ENCODE measurements at regions of chr15 and their contacts with region 1.

Region 1: DNA sequence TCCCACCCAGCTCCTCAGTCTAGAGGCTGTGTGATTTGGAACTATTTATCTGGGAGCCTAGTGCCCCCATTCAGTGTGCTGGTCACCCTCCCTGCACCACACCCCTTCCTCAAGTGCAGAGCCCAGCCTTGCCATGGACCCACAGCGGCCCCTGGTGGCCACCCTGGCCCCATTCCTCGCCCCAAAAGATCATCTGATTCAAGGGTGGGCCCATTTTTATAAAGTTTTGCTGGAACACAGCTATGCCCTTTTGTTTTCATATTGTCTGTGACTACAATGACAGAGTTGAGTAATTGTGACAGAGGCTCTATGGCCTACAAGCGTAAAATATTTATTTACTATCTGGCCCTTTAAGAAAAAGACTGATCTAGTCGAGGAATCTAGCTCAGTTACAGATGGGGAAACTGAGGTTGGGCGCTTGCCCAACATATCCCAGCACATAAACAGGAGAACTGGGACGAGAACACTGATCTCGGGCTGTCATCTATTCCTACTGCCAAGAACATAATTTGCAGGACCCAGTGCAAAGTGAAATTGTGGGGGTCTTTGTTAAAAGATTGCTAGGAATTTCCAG is 1.8 kb downstream of the FES start:
- DNase-seq: peak; percentile 80 to 85
- ATAC-seq: peak; percentile 65 to 76 (median 65)
- H3K4me3 ChIP-seq: peak overlapping the region; percentile 52
- H3K4me3 Mint-ChIP-seq: peak overlapping the region; percentile 90
- H3K27ac ChIP-seq: peak overlapping the region; percentile 61
- H3K27ac Mint-ChIP-seq: peak overlapping the region; percentile 85 to 86
- H3K4me1 ChIP-seq: peaks cover 63% of the 10 kb centered on the region
- H3K4me1 Mint-ChIP-seq: peaks cover 17 to 40% of the 10 kb centered on the region in 2 donors
- H3K27me3 ChIP-seq: no peaks in the 10 kb centered on the region
- H3K27me3 Mint-ChIP-seq: no peaks in the 10 kb centered on the region
- CTCF ChIP-seq: peak; percentile 99

Region 2: DNA sequence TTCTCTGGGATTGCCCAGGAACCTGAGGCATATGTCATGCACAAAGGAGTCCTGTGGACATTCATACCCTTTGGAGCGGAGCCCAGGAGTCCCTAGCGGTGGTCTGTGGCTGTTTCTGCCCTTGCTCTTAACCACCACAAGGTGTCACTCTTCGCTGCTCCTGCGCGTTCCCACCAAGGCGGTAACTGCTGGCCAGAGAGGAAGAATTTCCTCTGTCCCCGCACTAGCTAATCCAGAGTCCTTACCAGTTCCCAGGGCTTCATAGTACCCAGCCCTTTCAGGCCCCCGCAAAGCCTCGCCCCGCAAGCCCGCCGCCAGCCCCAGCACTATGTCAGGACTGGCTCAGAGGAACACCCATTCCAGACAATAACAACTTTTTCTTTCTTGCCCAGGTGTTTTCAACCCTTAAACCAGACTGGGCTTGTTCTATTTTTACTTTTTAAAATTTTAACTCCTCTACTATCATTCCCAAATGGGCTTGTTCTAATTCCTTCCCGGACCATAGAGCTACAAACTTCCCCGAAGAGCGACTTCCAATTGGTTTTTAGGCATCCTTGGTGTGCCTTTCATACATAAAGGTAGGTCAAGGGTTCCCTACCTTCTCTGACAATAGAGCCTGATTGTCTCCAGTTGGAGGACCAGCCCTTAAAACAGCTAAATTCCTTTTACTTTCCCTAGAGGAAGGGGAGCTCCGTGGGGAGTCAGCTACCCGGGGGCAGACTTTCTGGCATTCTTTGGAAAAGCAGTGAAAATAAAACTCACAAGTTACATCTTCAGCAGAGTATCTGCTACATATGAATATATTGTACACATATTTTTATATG is 565.9 kb before region 1 on chr15:
- intact Hi-C with region 1: loop called (anchors 1 kb)
- DNase-seq: peak; percentile 55 to 88
- ATAC-seq: peak; percentile 96 to 100 (median 99)
- H3K4me3 ChIP-seq: no peak overlapping the region
- H3K4me3 Mint-ChIP-seq: peak overlapping the region; percentile 3
- H3K27ac ChIP-seq: no peak overlapping the region
- H3K27ac Mint-ChIP-seq: peak overlapping the region in 1 of 2 donors; percentile 23
- H3K4me1 ChIP-seq: peaks cover 4% of the 10 kb centered on the region
- H3K4me1 Mint-ChIP-seq: peaks cover 8 to 9% of the 10 kb centered on the region in 2 donors
- H3K27me3 ChIP-seq: no peaks in the 10 kb centered on the region
- H3K27me3 Mint-ChIP-seq: peaks cover 0 to 3% of the 10 kb centered on the region in 2 donors
- CTCF ChIP-seq: peak; percentile 91

Region 3: GRCh38 chr15:90648137-90649070 is 237.7 kb before region 1 on chr15:
- intact Hi-C with region 1: loop called (anchors 1 kb)
- DNase-seq: peak; percentile 42 to 85
- ATAC-seq: peak; percentile 84 to 88 (median 88)
- H3K4me3 ChIP-seq: no peak overlapping the region
- H3K4me3 Mint-ChIP-seq: peak overlapping the region; percentile 84
- H3K27ac ChIP-seq: peak overlapping the region; percentile 27
- H3K27ac Mint-ChIP-seq: peak overlapping the region; percentile 85 to 92
- H3K4me1 ChIP-seq: peaks cover 12% of the 10 kb centered on the region
- H3K4me1 Mint-ChIP-seq: peaks cover 9 to 24% of the 10 kb centered on the region in 2 donors
- H3K27me3 ChIP-seq: no peaks in the 10 kb centered on the region
- H3K27me3 Mint-ChIP-seq: peaks cover 0 to 7% of the 10 kb centered on the region in 2 donors
- CTCF ChIP-seq: peak; percentile 95

Region 4: GRCh38 chr15:90716976-90717821 is 168.9 kb before region 1 on chr15 and contains the start of gene BLM:
- intact Hi-C with region 1: loop called (anchors 1 kb)
- DNase-seq: peak; percentile 91 to 98
- ATAC-seq: peak; percentile 98 to 100 (median 99)
- H3K4me3 ChIP-seq: peak within 1 kb of the TSS; percentile 92
- H3K4me3 Mint-ChIP-seq: peak within 1 kb of the TSS; percentile 98
- H3K27ac ChIP-seq: peak within 1 kb of the TSS; percentile 82
- H3K27ac Mint-ChIP-seq: peak within 1 kb of the TSS; percentile 95 to 97
- H3K4me1 ChIP-seq: peaks cover 5% of the 10 kb centered on the region
- H3K4me1 Mint-ChIP-seq: peaks cover 37 to 39% of the 10 kb centered on the region in 2 donors
- H3K27me3 ChIP-seq: no peaks in the 10 kb centered on the region
- H3K27me3 Mint-ChIP-seq: no peaks in the 10 kb centered on the region
- CTCF ChIP-seq: no peak
- total RNA-seq, gene BLM: 9.9 to 15.9 (median 14.1) TPM

Region 5: DNA sequence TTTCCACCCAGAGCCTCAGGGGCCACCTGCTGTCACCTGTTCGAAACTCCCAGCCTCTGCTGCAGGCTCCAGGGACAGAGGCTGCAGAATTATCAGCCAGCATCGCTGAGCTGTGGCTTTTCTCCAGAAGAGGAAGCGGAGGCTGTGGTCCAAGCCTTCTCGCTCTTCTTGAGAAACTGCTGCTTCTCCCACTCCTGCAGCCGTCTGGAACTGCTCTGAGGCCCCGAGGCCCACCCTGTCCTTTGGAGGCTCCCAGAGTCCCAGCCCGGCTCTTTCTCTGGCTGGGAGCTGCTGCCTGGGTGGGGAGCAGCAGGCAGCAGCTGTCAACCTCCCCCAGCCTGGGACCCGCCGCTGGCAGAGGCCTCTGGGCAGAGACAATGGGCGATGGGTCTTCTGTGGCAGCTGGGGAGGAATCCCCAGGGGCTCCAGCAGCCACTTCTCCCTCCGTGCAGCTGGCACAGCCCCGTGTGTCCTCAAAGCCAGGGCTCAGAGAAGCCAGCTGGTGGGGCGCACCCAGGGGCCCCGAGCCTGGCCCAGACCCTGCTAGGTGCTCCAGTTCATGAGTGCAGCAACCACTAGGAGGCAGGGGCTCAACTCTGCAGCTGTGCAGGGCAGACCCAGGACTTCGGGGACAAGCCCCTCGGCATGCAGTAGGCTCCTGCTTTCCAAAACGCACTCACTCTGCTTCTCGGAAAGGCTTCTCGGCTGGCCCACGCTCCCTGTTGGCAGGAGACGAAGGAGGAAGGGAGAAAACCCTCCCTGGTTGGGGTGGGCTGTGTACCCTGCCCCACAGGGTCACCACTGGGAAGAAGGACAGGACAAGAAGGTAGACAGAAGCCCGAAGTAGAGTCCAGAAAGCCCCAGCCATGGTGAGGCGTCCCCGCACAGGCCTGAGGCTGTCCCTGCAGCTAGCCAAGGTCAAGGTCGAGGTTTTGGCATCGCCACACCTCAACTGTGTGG is 67.6 kb before region 1 on chr15:
- intact Hi-C with region 1: loop called (anchors 5 kb)
- DNase-seq: peak; percentile 27 to 55
- ATAC-seq: peak in 1 of 3 donors; percentile 44
- H3K4me3 ChIP-seq: no peak overlapping the region
- H3K4me3 Mint-ChIP-seq: peak overlapping the region; percentile 80
- H3K27ac ChIP-seq: peak overlapping the region; percentile 79
- H3K27ac Mint-ChIP-seq: peak overlapping the region; percentile 86 to 96
- H3K4me1 ChIP-seq: peaks cover 76% of the 10 kb centered on the region
- H3K4me1 Mint-ChIP-seq: peaks cover 67 to 70% of the 10 kb centered on the region in 2 donors
- H3K27me3 ChIP-seq: no peaks in the 10 kb centered on the region
- H3K27me3 Mint-ChIP-seq: no peaks in the 10 kb centered on the region
- CTCF ChIP-seq: peak; percentile 28

Measured in natural killer cell (primary cell).